ENCODE measurements at regions of chr19 and their contacts with region 1.

Region 1: DNA sequence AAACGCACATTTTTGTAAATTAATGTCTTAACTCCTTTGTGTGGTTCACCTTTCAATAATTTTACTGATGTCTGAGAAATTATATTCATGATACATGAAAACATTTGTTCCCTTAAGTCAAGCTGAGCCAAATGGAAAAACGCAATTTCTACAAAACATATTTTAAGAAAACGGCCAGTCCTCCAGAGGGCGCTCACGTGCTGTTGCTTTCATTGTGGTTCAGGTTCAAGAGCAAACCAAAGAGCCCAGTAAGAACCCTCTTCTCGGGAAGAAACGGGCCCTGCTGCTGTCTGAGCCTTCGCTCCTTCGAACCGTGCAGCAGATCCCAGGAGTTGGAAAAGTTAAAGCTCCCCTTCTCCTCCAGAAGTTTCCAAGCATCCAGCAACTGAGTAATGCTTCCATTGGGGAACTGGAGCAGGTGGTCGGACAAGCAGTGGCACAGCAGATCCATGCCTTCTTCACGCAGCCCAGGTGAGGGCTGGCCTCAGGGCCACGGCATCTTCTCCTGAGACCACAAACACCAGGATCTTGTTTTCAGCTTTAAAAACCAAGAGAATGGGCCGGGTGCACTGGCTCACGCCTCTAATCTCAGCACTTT is 4.3 kb downstream of the FAAP24 start:
- DNase-seq: peak; percentile 78 to 88
- H3K4me3 ChIP-seq: no peak overlapping the region
- H3K27ac ChIP-seq: no peak overlapping the region
- H3K4me1 ChIP-seq: peaks cover 0 to under 1% of the 10 kb centered on the region in 2 donors
- H3K27me3 ChIP-seq: no peaks in the 10 kb centered on the region
- CTCF ChIP-seq: peak; percentile 52 to 83 (median 72)
- POLR2A ChIP-seq: no peak

Region 2: DNA sequence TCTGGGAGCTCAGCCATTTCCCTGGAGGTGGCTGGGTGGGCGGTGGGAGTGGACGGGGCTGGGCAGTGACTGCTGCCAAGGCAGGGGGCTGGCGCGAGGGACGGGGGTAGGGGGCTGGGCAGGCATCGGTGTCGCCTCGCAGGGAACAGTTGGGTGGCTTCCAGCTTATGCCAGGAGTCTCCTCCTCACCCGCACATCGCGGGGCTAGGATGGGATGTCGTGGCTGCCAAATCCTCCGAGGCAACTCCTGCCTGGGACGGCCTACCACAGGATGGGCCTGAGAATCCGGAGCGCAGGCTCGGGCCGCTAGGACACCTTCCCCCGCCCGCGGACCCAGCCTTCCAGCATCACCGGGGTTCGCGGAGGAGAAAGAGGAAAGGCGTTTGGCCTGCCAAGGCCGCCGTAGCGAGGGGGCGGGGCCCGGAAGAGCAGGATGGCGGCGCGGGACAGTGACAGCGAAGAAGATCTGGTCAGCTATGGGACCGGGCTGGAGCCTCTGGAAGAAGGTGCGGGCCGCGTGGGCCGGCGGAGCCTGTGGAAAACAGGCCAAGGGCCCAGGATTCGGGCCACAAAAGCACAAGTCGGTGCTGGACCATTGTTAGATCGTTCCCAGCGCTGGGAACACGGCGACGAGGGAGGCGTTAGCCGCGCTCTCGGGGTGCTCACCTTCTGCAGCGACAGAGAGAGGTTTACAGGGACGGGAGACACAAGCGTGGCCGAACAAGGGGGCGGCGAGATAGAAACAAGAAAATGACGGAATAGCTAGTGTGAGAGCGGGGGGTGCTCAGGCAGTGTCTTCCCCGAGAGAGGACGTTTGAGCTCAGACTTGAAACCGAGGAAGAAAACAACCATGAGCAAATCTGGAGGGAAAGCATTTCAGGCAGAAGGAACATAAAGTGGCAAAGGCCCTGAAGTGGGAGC is 104.7 kb after region 1 on chr19 and contains the start of gene GPATCH1:
- intact Hi-C with region 1: loop called (anchors 5 kb)
- DNase-seq: peak; percentile 90 to 91
- H3K4me3 ChIP-seq: peak within 1 kb of the TSS; percentile 76 to 80 (median 78)
- H3K27ac ChIP-seq: peak within 1 kb of the TSS in 2 of 3 donors; percentile 46 to 59
- H3K4me1 ChIP-seq: peaks cover 9 to 10% of the 10 kb centered on the region in 2 donors
- H3K27me3 ChIP-seq: no peaks in the 10 kb centered on the region
- CTCF ChIP-seq: peak in 1 of 6 experiments; percentile 28
- POLR2A ChIP-seq: peak in 1 of 2 donors; percentile 46
- total RNA-seq, gene GPATCH1: 9.1 to 11.6 (median 10.0) TPM

Region 3: DNA sequence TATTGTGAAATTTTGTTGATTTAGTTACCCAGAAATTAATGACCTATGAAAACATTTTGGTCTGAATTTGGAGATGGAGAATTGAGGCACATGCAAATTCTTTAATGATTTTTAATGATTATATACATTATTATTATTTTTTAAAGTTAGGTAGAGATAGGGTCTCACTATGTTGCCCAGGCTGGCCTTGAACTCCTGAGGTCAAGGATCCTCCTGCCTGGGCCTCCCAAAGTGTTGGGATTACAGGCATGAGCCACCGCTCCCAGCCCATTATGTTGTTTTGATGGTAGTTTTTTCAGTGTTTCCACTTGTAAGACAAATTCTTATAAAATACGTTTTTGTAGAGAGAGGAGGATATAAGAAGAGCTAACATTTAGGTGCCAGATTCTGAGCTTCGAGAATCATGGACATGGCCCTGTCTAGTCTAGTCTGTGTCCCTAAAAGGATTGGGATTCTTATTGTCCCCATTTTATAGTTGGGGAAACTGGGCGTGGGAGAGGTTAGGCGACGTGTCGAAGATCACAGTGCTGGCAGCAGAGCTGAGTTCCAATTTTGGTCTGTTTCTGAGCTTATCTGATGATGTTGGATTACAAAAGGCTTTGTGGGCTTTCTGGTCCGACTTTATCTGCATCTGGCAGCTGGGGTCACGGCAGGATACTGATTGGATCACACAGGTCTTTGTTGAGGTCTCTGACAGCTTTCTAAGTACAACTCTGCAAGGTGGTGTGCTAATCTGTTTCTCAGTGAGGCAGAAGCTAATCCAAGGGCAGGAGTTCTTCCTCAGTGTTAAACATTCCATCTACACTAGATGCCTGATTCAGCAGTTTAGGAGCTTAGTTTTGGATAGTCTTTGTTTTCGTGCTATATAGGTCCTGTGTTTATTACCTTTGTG is 148.1 kb after region 1 on chr19:
- intact Hi-C with region 1: loop called (anchors 5 kb)
- DNase-seq: no peak
- H3K4me3 ChIP-seq: no peak overlapping the region
- H3K27ac ChIP-seq: no peak overlapping the region
- H3K4me1 ChIP-seq: no peaks in the 10 kb centered on the region
- H3K27me3 ChIP-seq: no peaks in the 10 kb centered on the region
- CTCF ChIP-seq: no peak
- POLR2A ChIP-seq: no peak

Measured in thyroid gland (tissue), 4 donors.